Astrocyte of the cerebellum (primary cell): ENCODE measurements at regions of chr13 and their contacts with region 1.

Region 1: DNA sequence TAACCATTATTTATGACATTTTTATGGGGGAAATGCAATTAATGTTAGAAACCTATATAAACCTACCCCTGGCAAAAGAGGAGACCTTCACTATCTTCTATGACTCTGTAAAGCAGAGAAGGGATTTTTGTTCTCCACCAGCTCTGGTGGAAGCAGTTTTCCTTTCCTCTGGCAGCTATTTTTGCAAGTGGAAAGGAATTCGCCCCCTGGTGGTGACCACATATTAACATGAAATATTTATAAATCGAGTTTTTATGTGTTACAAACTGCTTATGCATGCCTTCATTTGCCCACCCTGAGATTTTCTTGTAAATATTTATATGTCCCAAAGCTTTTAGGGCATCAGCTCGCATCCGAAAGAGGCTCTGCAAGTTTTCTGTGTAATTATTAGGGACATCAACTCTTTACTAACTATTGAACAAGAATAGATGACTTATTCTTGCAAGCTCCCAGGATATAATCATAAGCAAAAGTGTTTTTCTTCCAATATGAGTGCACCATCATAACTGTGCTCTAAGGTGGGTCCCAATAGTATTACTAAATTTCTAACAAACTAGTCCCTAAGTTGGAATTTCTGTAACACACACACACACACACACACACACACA is 62.4 kb downstream of the SERTM1 start:
- DNase-seq: peak; percentile 59
- H3K4me3 ChIP-seq: no peak overlapping the region
- CTCF ChIP-seq: peak; percentile 64

Region 2: DNA sequence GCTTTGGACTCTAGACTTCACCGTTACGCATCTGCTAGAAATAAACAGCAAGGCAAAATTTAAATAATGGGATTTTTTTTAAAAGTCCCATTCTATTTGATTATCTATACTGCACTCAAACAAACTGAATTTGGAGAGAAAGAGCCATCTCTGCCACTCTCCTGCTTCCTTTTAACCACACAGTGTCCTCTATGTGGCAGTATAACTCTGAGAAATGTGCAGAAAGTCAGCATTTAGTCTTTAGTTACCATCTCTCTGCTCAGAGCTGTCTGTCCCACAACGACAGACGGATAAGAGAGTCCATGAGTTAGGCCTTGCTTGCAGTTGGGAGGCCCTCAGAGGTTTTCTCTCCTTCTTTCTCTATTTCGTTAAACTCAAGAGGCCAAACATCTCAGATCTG is 282.7 kb before region 1 on chr13:
- in situ Hi-C with region 1: loop called (anchors 10 kb)
- DNase-seq: no peak
- H3K4me3 ChIP-seq: no peak overlapping the region
- CTCF ChIP-seq: peak; percentile 46

Region 3: DNA sequence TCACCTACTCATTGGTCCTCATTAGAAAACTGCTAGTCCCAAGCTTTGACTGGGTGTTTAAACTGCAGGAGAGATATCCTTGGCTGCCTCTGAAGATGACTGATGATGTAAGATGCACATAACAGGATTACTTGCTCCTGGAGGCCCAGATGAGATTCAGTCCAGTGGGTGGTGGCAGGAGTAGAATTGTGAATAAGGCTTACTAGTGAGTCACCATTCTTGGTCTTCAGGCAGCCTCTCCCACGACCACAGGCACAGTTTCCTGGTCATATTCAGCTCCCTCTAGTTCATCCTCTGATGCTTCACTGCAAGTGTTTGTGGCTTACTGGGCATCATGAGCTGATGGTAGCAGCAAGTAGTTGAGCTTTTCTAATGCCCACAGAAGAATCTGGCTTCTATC is 50.3 kb before region 1 on chr13:
- in situ Hi-C with region 1: loop called (anchors 5 kb)
- DNase-seq: no peak
- H3K4me3 ChIP-seq: no peak overlapping the region
- CTCF ChIP-seq: no peak

Region 4: GRCh38 chr13:36778083-36778671 is 42.0 kb after region 1 on chr13:
- in situ Hi-C with region 1: no loop called
- DNase-seq: peak; percentile 57
- H3K4me3 ChIP-seq: peak overlapping the region; percentile 36
- CTCF ChIP-seq: no peak